Caco-2 (cell line): ENCODE measurements at regions of chr3 and their contacts with region 1.

Region 1: GRCh38 chr3:179929091-179929529 is 107.6 kb downstream of the PEX5L start:
- DNase-seq: peak; percentile 38 to 57
- H3K4me3 ChIP-seq: no peak overlapping the region
- H3K4me3 Mint-ChIP-seq: no peak overlapping the region
- H3K27ac Mint-ChIP-seq: no peak overlapping the region
- H3K4me1 ChIP-seq: no peaks in the 10 kb centered on the region
- H3K4me1 Mint-ChIP-seq: no peaks in the 10 kb centered on the region
- H3K27me3 ChIP-seq: no peaks in the 10 kb centered on the region; the same call in 1 of the 2 replicates
- H3K27me3 Mint-ChIP-seq: peaks cover 19% of the 10 kb centered on the region
- CTCF ChIP-seq: peak; percentile 76 to 85

Region 2: GRCh38 chr3:180085122-180085710 is 156.1 kb after region 1 on chr3:
- CTCF ChIA-PET with region 1: no interaction called
- POLR2A ChIA-PET with region 1: no interaction called
- intact Hi-C with region 1: loop called (anchors 2 kb)
- DNase-seq: no peak
- H3K4me3 ChIP-seq: no peak overlapping the region
- H3K4me3 Mint-ChIP-seq: no peak overlapping the region
- H3K27ac Mint-ChIP-seq: no peak overlapping the region
- H3K4me1 ChIP-seq: no peaks in the 10 kb centered on the region
- H3K4me1 Mint-ChIP-seq: no peaks in the 10 kb centered on the region
- H3K27me3 ChIP-seq: no peaks in the 10 kb centered on the region
- H3K27me3 Mint-ChIP-seq: peaks cover 9% of the 10 kb centered on the region
- CTCF ChIP-seq: peak in 1 of 2 experiments; percentile 6

Region 3: DNA sequence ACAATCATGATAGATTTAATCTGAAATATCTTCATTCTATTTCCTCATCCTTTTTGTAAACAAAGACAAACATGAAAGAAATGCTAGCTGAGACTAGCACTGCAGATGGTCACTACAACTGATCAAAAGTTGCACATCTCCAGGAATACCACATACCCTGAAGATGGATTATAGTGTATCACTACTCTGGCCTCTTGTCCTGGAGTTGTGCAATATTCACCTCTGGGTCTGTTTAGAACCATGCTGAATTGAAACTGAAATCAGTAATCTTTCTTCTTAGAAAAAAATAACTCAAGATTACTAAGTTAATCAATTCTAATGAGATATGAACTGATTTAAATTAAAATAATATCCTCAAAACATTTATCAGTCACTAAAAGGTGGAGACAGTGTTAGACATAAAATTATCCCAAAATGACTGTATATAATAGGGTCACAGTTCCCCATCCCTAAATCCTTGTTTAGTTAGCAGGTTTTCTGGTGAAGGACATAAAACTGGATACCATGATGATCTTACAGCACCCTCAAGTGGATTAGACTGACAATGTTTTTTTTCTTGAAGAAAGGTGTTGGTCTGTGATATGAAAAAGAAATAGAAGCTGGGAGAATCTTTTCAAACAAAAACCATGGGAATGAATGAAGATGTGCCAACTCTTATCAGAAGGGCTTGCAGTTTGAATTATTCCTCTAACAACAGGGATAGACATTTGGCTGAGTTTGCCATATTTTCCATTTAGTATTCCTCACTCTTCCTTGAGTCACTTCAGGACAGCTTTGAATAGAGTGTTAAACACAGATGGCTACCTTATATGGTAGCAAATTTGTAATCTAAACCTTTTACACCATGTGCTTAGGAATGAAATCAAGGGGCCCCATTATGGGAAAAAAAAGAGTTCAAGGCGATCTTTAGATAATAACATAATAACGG is 665.8 kb after region 1 on chr3:
- CTCF ChIA-PET with region 1: no interaction called
- POLR2A ChIA-PET with region 1: no interaction called
- intact Hi-C with region 1: loop called (anchors 1 kb)
- DNase-seq: peak in 1 of 2 experiments; percentile 14
- H3K4me3 ChIP-seq: no peak overlapping the region
- H3K4me3 Mint-ChIP-seq: no peak overlapping the region
- H3K27ac Mint-ChIP-seq: no peak overlapping the region
- H3K4me1 ChIP-seq: no peaks in the 10 kb centered on the region
- H3K4me1 Mint-ChIP-seq: no peaks in the 10 kb centered on the region
- H3K27me3 ChIP-seq: no peaks in the 10 kb centered on the region
- H3K27me3 Mint-ChIP-seq: peaks cover 3% of the 10 kb centered on the region
- CTCF ChIP-seq: peak in 1 of 2 experiments; percentile 13